ENCODE measurements at regions of chr7 and their contacts with region 1.

Region 1: DNA sequence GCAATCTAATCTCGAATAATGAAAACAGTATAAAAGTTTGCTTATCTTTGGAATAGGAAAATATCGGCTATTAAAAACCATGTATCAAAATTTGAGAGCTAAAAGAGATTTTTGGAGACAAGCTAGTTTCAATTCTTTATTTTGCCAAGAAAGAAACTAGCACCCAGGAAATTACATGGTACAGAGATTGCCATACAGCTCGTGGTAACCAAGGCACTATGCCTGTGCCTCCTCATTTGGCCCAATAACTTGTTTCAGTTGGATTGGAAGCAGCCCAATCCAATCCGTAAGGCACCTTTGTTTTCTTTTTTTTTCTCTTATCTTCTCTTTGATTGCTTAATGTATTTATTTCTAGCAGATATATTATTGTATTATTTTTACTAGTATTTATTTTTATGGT is 55.0 kb downstream of the GNAI1 start:
- DNase-seq: no peak
- ATAC-seq: no peak
- H3K4me3 ChIP-seq: no peak overlapping the region
- H3K27ac ChIP-seq: no peak overlapping the region
- H3K4me1 ChIP-seq: peaks cover 0 to 24% (median 3%) of the 10 kb centered on the region in 12 donors
- H3K27me3 ChIP-seq: no peaks in the 10 kb centered on the region
- CTCF ChIP-seq: no peak
- POLR2A ChIP-seq: no peak

Region 2: GRCh38 chr7:80114159-80114558 is 75.5 kb before region 1 on chr7:
- intact Hi-C with region 1: no loop called
- DNase-seq: no peak
- ATAC-seq: no peak
- H3K4me3 ChIP-seq: no peak overlapping the region
- H3K27ac ChIP-seq: no peak overlapping the region
- H3K4me1 ChIP-seq: no peaks in the 10 kb centered on the region
- H3K27me3 ChIP-seq: no peaks in the 10 kb centered on the region
- CTCF ChIP-seq: no peak
- POLR2A ChIP-seq: no peak

Region 3: GRCh38 chr7:80145780-80146422 is 43.7 kb before region 1 on chr7:
- intact Hi-C with region 1: loop called in 1 of 10 experiments (anchors 5 kb)
- DNase-seq: no peak
- ATAC-seq: peak in 1 of 4 donors; percentile 24
- H3K4me3 ChIP-seq: no peak overlapping the region
- H3K27ac ChIP-seq: peak overlapping the region in 1 of 12 donors; percentile 1
- H3K4me1 ChIP-seq: peaks cover 0 to 43% (median 12%) of the 10 kb centered on the region in 12 donors
- H3K27me3 ChIP-seq: no peaks in the 10 kb centered on the region
- CTCF ChIP-seq: no peak
- POLR2A ChIP-seq: no peak